Body of pancreas (tissue), 4 donors: ENCODE measurements at regions of chr19 and their contacts with region 1.

Region 1: GRCh38 chr19:14136509-14137281 is at the start of gene ASF1B:
- DNase-seq: peak; percentile 98 to 99 (median 99)
- ATAC-seq: peak; percentile 90
- H3K4me3 ChIP-seq: peak within 1 kb of the TSS; percentile 22 to 63
- H3K27ac ChIP-seq: peak within 1 kb of the TSS; percentile 91 to 99 (median 95)
- H3K4me1 ChIP-seq: peaks cover 11% of the 10 kb centered on the region
- H3K27me3 ChIP-seq: no peaks in the 10 kb centered on the region
- CTCF ChIP-seq: peak; percentile 69 to 99 (median 95)
- POLR2A ChIP-seq: peak in 2 of 3 donors; percentile 84 to 89
- total RNA-seq, gene ASF1B: 0.26 to 1.6 TPM

Region 2: GRCh38 chr19:13920940-13921761 is 215.5 kb before region 1 on chr19:
- intact Hi-C with region 1: no loop called
- DNase-seq: peak in 1 of 4 donors; percentile 43
- ATAC-seq: peak; percentile 64
- H3K4me3 ChIP-seq: no peak overlapping the region
- H3K27ac ChIP-seq: no peak overlapping the region
- H3K4me1 ChIP-seq: no peaks in the 10 kb centered on the region
- H3K27me3 ChIP-seq: no peaks in the 10 kb centered on the region
- CTCF ChIP-seq: no peak
- POLR2A ChIP-seq: no peak

Region 3: DNA sequence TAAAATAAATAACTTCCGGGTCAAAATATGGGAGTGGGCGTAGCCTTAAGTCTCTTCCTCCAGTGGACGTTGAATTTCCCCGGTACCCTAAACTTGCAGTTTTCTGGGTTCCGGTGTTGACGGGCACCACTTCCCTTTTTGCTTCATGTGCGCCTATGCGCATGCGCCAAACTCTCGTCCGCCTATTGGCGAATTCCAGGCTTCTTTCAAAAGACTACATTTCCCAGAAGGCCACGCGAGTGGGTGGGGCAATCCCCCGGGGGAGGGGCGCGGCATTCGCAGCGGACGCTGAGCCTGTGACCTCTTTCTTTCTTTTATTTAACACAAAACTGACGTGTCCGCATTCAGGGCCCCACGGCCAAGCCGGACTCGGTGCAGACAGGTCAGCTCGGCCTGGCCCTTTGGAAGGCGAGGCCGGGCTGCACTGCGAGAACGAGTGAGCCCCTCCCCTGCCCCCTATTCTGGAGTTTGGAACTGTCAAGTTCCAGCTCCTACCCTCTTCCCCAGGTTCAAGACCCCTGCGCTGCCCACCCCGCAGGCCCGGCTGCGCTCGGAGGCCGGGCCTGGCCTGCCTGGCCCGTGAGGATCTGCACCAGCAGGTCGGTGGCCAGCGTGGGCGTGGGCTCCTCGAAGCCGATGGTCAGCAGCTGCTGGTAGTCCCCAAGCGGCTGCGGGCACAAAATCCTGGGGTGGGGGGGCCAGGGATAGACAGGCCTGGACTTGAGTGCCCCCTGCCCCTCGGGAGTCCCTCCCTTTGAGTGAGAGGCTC is 55.2 kb before region 1 on chr19:
- intact Hi-C with region 1: loop called (anchors 10 kb)
- DNase-seq: peak; percentile 99 to 100 (median 99)
- ATAC-seq: peak; percentile 95
- H3K4me3 ChIP-seq: peak overlapping the region; percentile 63 to 70
- H3K27ac ChIP-seq: peak overlapping the region; percentile 79 to 96 (median 93)
- H3K4me1 ChIP-seq: peaks cover 34% of the 10 kb centered on the region
- H3K27me3 ChIP-seq: no peaks in the 10 kb centered on the region
- CTCF ChIP-seq: peak in 1 of 7 experiments; percentile 16
- POLR2A ChIP-seq: peak; percentile 66 to 96 (median 94)